ENCODE measurements at regions of chr1 and their contacts with region 1.

Region 1: GRCh38 chr1:223748773-223749733 is 36.7 kb downstream of the CAPN2 start:
- DNase-seq: peak; percentile 46 to 72 (median 72)
- H3K4me3 ChIP-seq: peak overlapping the region; percentile 24 to 85 (median 67)
- H3K27ac ChIP-seq: no peak overlapping the region
- H3K4me1 ChIP-seq: peaks cover 0 to 8% (median 6%) of the 10 kb centered on the region in 4 experiments
- H3K27me3 ChIP-seq: peaks cover 0 to 2% (median 0%) of the 10 kb centered on the region in 5 experiments

Region 2: DNA sequence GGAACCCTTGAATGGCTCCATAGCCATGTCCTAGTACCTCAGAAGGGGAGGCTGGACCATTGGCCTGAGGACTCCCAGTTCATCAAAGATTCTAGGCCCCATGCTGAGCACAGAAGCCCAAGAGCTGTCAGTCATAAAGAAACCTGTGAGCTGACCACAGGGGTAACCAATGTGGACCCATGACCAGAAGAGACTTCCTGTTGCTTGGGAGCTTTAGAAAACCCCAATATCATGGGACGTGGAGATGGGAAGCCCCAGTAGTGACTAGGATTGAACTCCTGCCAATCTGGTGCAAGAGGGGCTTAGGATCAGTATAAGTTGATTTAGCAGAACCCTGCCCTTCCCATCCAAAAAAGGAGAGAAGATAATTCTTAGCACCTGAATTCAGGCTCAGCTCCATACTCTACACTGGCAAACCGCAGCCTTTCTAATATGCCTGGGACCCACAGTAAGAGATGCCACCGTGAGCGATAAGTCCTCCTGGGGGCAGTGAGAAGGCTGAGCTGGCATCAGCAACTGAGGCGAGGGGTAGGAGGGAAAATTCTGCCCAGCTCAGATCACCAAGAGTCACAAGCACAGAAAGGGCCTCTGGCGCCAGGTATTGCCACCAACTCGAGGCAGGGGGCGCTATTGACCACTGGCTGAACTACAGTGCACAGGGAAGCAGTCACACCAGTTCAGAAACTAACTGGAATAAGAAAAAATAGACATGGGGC is 192.5 kb before region 1 on chr1:
- CTCF ChIA-PET with region 1: interaction called, 12 read pairs
- POLR2A ChIA-PET with region 1: no interaction called
- DNase-seq: peak; percentile 54 to 74 (median 65)
- H3K4me3 ChIP-seq: no peak overlapping the region
- H3K27ac ChIP-seq: no peak overlapping the region
- H3K4me1 ChIP-seq: no peaks in the 10 kb centered on the region
- H3K27me3 ChIP-seq: no peaks in the 10 kb centered on the region

Region 3: DNA sequence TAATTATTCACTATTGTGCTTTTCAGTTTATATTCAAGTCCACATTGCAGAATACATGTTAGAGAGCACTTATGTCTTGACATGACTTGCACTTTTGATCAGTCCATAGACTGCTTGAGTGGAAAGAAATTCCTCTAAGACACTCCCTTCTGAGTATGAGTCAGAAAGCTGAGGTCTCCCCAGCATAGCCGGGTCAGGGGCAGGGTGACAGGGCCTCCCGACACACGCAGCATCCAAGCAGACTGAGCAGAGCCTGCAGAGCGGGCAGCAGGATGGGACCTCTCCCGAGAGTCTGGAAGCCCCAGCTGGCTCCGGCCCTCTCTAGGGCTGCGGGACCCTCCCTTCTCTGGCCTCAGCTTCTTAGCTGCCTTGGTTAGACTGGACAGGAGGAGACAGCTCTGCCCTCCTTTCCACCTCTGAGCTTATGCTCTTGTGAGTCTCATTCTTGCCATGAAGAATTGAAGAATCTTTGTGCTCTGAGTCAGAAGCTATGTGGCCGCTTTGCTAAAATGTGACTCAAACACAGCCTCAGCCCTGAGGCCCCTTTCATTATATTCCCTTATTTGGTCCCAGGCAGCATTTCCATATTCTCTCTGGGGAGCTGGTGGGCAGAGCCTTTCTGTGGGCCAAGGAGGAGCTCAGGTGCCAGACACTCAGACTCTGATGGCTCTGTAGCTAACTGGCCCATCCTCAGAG is 48.0 kb before region 1 on chr1:
- CTCF ChIA-PET with region 1: interaction called, 98 read pairs
- POLR2A ChIA-PET with region 1: no interaction called
- DNase-seq: peak in 2 of 3 donors; percentile 42 to 52
- H3K4me3 ChIP-seq: no peak overlapping the region
- H3K27ac ChIP-seq: peak overlapping the region in 1 of 2 experiments; percentile 20
- H3K4me1 ChIP-seq: peaks cover 0 to 10% (median 5%) of the 10 kb centered on the region in 4 experiments
- H3K27me3 ChIP-seq: peaks cover 0 to 2% (median 0%) of the 10 kb centered on the region in 5 experiments

Region 4: GRCh38 chr1:223738465-223739365 is 10.3 kb before region 1 on chr1:
- CTCF ChIA-PET with region 1: interaction called, 28 read pairs
- POLR2A ChIA-PET with region 1: no interaction called
- DNase-seq: no peak
- H3K4me3 ChIP-seq: no peak overlapping the region
- H3K27ac ChIP-seq: no peak overlapping the region
- H3K4me1 ChIP-seq: no peaks in the 10 kb centered on the region
- H3K27me3 ChIP-seq: no peaks in the 10 kb centered on the region

Region 5: DNA sequence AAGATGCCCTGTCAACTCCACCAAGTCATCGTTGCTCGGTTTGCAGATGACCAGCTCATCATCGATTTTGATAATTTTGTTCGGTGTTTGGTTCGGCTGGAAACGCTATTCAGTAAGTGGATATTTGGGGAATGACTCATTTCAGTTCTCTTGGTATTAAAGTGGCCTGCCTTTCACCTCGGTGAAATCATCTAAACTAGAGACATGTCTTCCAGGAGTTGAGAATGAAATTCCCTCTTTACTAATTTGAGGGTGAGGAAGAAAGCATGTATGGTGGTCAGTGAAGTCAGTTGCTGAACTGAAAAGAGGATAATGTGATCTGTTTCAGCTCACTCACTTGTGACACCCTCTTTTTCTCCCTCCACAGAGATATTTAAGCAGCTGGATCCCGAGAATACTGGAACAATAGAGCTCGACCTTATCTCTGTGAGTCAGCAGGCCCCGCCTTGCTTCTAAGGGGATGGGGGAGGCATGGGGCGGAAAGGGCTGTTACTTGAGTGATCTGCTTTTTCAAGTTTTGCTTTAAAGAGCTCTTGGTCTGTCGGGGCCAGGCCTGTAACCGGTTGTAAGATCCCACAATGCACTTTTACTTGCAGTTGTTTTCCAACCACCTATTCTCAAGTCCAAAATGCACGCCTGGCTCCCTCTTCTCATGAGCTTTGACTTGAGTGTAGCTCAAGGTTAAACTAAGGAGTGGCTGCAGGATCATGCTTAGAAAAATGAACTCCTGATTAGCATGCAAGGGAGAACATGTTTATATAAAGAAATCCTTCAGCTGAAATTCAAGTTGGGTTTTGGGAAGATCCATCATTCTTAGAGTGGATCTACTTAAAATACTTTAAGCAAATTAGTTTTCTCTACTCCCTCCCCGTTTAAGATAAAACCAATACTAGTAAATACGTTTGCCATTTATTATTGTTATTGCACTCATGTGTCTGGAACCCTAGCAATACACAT is 23.0 kb after region 1 on chr1:
- CTCF ChIA-PET with region 1: interaction called, 11 read pairs
- POLR2A ChIA-PET with region 1: no interaction called
- DNase-seq: peak; percentile 23 to 76 (median 52)
- H3K4me3 ChIP-seq: no peak overlapping the region
- H3K27ac ChIP-seq: peak overlapping the region; percentile 6 to 78
- H3K4me1 ChIP-seq: peaks cover 0 to 35% (median 11%) of the 10 kb centered on the region in 4 experiments
- H3K27me3 ChIP-seq: no peaks in the 10 kb centered on the region

Measured in common myeloid progenitor, CD34-positive (primary cell).